Activated CD4-positive, alpha-beta memory T cell treated with anti-CD3 and anti-CD28 coated beads for 36 hours (primary cell): ENCODE measurements at regions of chr9 and their contacts with region 1.

Region 1: GRCh38 chr9:77163884-77164283 is 13.4 kb upstream of the VPS13A start:
- DNase-seq: no peak
- H3K4me3 Mint-ChIP-seq: no peak overlapping the region
- H3K27ac Mint-ChIP-seq: no peak overlapping the region
- H3K4me1 Mint-ChIP-seq: no peaks in the 10 kb centered on the region
- H3K27me3 Mint-ChIP-seq: peaks cover 8% of the 10 kb centered on the region

Region 2: GRCh38 chr9:77215874-77216273 is 52.0 kb after region 1 on chr9:
- CTCF ChIA-PET with region 1: interaction called, 10 read pairs
- POLR2A ChIA-PET with region 1: no interaction called
- intact Hi-C with region 1: no loop called
- DNase-seq: no peak
- H3K4me3 Mint-ChIP-seq: no peak overlapping the region
- H3K27ac Mint-ChIP-seq: no peak overlapping the region
- H3K4me1 Mint-ChIP-seq: no peaks in the 10 kb centered on the region
- H3K27me3 Mint-ChIP-seq: no peaks in the 10 kb centered on the region